ENCODE measurements at regions of chr6 and their contacts with region 1.

Region 1: DNA sequence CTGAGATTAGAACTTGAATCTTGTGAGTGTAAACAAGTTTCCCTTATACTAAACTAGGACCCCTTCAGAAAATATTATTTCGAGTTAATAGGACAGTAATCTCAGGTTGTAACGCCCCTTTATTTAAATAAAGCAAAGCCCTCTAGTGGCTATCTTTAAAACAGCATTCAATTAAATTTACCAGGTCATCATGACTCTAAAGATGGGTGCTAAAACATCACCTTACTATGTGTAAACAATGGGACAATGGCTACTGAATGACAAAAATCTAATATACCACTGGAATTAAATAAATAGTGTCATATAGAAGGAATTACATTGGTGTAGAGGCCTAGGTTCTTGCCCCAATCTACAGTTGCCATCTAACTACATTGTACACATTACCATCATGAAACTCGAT is 255.4 kb upstream of the IRAK1BP1 start:
- H3K4me3 ChIP-seq: no peak overlapping the region
- H3K27ac ChIP-seq: no peak overlapping the region
- H3K4me1 ChIP-seq: no peaks in the 10 kb centered on the region
- CTCF ChIP-seq: no peak

Region 2: GRCh38 chr6:78598966-78599365 is 13.0 kb before region 1 on chr6:
- CTCF ChIA-PET with region 1: interaction called, 14 read pairs
- POLR2A ChIA-PET with region 1: no interaction called
- H3K4me3 ChIP-seq: no peak overlapping the region
- H3K27ac ChIP-seq: no peak overlapping the region
- H3K4me1 ChIP-seq: no peaks in the 10 kb centered on the region
- CTCF ChIP-seq: no peak

Measured in HEK293 (cell line).